ENCODE measurements at regions of chr10 and their contacts with region 1.

Region 1: GRCh38 chr10:32367793-32368453 is 21.0 kb upstream of the EPC1 start:
- DNase-seq: peak; percentile 82 to 90 (median 86)
- H3K4me3 ChIP-seq: peak overlapping the region in 1 of 7 experiments; percentile 52
- H3K27ac ChIP-seq: peak overlapping the region in 1 of 2 experiments; percentile 63
- H3K4me1 ChIP-seq: peaks cover 4 to 14% (median 7%) of the 10 kb centered on the region in 4 experiments
- H3K27me3 ChIP-seq: no peaks in the 10 kb centered on the region

Region 2: GRCh38 chr10:31847515-31847914 is 520.4 kb before region 1 on chr10:
- CTCF ChIA-PET with region 1: no interaction called
- POLR2A ChIA-PET with region 1: no interaction called
- DNase-seq: no peak
- H3K4me3 ChIP-seq: no peak overlapping the region
- H3K27ac ChIP-seq: no peak overlapping the region
- H3K4me1 ChIP-seq: no peaks in the 10 kb centered on the region
- H3K27me3 ChIP-seq: no peaks in the 10 kb centered on the region

Region 3: DNA sequence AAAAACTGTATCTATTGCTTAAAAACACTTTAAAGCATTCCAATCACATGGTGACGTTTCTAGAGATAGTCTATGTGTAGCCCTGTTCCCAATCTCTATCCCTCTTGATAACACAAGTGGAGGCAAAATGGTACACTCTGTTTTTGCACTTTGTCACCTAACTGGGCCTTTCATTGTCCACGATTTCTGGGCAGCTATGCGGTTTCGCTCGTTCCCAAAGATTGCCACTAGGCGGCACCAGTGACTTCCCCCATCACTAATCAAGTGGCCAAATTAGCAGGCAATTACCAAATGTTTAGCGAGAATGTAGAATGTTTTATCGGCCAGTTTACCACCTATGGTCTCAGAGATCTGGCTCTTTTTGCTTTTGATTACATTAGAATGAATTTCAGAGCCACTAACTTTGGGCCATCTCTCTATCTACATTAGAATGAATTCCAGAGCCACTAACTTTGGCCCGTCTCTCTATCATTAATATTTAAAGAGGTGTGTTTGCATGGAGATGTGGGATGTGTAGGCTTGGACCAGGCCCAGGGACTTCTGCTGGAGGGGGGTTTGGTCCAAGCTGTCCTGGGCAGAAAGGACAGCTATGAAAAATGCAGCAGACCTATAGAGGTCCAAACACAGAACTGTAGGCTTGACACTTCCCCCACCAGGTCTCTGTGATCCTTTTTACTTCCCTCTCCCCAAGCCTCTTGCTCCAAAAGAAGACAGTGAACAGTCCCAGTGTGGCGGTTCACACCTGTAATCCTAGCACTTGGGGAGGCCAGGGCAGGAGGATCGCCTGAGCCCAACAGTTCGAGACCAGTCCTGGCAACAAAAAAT is 111.1 kb before region 1 on chr10:
- CTCF ChIA-PET with region 1: interaction called, 20 read pairs
- POLR2A ChIA-PET with region 1: no interaction called
- DNase-seq: peak; percentile 70 to 84 (median 79)
- H3K4me3 ChIP-seq: peak overlapping the region in 2 of 7 experiments; percentile 16 to 34
- H3K27ac ChIP-seq: no peak overlapping the region
- H3K4me1 ChIP-seq: peaks cover 0 to 2% (median 0%) of the 10 kb centered on the region in 4 experiments
- H3K27me3 ChIP-seq: no peaks in the 10 kb centered on the region